ENCODE measurements at regions of chr3 and their contacts with region 1.

Region 1: GRCh38 chr3:78660957-78661356 is 1106.8 kb downstream of the ROBO1 start:
- DNase-seq: no peak
- CTCF ChIP-seq: no peak

Region 2: DNA sequence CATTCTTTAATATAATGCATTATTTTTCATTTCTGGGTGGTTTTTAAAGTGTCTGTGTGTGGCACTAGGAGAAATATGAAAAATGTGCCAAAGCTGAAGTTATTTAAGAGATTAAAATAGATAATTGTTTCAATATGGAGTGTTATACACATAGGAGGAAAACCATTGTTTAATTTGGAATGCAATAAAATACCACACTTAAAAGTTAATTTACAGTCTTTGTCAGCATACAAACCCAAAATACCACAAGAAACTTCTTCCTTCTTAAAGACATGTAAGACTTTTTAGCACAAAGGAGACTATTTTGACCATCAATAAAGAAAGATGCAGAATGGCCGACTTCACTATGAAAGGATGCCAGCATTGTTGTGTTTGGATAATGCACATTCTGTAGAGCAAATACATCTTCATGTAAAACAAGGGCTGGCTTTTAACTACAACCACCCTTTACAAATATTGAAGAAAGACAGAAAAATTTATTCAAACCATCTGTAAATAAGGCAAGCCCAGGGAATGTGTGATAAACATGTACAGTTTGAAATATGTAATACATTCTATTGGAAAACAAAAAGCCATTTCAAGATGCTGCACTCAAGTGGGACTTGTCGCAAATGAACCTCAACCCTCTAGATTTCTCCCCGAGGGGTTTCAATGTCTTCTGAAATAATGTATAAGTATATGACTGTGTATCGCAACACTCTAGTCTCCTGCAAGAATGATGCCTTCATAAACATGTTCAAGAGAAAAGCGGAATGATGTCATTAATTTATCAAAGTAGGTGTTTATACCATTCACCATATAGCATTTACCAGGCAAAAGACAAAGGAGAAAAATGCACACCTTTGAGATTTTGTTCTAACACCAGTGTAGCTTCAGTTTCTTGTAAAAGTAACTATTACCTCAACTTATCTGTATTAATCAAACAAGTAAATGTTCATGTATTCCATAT is 39.6 kb before region 1 on chr3:
- in situ Hi-C with region 1: no loop called
- DNase-seq: no peak
- CTCF ChIP-seq: no peak

Region 3: GRCh38 chr3:79027593-79027992 is 366.6 kb after region 1 on chr3:
- in situ Hi-C with region 1: loop called (anchors 5 kb)
- DNase-seq: no peak
- CTCF ChIP-seq: no peak

Measured in GM13977 (cell line).